Colonic mucosa (tissue), 4 donors: ENCODE measurements at regions of chr1 and their contacts with region 1.

Region 1: DNA sequence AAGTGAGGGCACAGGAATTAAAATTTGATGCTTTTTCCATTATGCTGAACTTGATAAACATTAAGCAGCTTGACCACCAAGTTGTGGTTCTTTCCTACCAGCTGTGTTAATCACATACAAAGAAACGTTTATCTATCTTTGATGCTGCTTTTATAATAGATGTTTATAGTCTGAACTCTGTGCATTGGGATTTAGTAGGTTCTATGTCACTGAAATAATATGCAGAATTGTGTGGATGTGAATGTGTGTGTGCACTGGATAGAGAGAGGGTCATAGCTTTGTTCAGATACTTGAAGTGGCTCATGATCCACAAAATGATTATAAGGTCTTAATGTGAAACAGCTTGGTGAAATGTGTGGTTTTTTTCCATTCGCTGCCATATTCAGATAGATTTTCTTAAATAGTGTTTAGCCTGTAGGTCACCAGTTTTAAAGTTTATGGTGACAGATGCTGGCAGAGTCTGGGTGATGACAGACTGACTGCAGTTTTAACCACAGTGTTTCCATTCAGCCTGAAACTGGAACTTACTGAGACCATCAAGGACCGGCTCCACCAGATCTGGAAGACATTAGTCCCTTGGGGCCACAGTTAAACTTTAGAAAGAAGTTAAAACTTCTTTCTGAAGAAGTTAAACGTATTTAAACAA is 10.2 kb downstream of the DDI2 start:
- DNase-seq: no peak
- H3K4me3 ChIP-seq: no peak overlapping the region
- H3K27ac ChIP-seq: no peak overlapping the region
- H3K4me1 ChIP-seq: peaks cover 10% of the 10 kb centered on the region
- H3K27me3 ChIP-seq: no peaks in the 10 kb centered on the region
- CTCF ChIP-seq: no peak

Region 2: DNA sequence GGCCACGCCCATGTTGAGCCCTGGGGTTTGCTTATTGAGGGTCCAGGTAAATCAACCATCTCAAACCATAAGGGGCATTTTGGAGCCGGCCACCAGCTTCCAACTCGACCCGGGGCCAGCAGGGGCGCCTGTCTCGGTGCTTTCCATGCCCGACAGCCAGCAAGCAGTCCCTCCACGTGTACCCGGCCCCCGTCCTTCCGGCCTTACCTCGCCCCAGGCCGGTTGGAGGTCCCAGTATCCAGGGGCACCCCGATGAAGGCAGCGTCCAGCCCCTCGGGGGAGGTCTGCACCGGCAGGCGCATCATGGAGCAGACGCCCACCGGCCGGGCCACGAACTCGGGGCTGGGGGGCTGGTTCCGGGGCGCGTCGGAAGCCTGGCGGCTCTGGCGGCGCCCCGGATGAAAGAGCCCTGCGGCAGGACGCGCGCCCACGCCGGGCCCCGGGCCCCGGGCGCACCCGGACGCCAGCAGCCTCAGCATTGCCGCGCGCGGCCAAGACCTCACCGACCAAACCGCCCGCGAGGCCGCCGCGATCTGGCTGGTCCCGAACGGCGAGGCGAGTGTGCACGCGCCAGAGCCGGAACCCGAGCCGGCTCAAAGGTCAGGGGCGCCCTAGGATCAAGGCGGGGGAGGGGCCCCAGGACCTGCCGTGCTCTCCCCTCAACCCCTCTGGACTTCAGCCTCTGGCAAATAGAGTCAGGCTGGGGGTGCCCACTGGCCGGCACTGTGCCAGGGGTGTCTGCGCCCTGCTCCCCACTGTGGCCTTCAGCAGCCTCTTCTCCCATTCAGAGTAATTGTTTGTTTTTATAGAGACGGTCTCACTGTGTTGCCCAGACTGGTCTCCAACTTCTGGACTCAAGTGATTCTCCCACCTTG is 42.7 kb before region 1 on chr1 and contains the start of gene AGMAT:
- intact Hi-C with region 1: loop called (anchors 5 kb)
- DNase-seq: peak; percentile 76
- H3K4me3 ChIP-seq: peak within 1 kb of the TSS; percentile 56
- H3K27ac ChIP-seq: peak within 1 kb of the TSS; percentile 12
- H3K4me1 ChIP-seq: peaks cover 4% of the 10 kb centered on the region
- H3K27me3 ChIP-seq: no peaks in the 10 kb centered on the region
- CTCF ChIP-seq: no peak
- total RNA-seq, gene AGMAT: 21.6 to 54.2 TPM

Region 3: GRCh38 chr1:15723631-15724251 is 96.3 kb after region 1 on chr1:
- intact Hi-C with region 1: loop called (anchors 10 kb)
- DNase-seq: no peak
- H3K4me3 ChIP-seq: no peak overlapping the region
- H3K27ac ChIP-seq: no peak overlapping the region
- H3K4me1 ChIP-seq: no peaks in the 10 kb centered on the region
- H3K27me3 ChIP-seq: no peaks in the 10 kb centered on the region
- CTCF ChIP-seq: no peak

Region 4: DNA sequence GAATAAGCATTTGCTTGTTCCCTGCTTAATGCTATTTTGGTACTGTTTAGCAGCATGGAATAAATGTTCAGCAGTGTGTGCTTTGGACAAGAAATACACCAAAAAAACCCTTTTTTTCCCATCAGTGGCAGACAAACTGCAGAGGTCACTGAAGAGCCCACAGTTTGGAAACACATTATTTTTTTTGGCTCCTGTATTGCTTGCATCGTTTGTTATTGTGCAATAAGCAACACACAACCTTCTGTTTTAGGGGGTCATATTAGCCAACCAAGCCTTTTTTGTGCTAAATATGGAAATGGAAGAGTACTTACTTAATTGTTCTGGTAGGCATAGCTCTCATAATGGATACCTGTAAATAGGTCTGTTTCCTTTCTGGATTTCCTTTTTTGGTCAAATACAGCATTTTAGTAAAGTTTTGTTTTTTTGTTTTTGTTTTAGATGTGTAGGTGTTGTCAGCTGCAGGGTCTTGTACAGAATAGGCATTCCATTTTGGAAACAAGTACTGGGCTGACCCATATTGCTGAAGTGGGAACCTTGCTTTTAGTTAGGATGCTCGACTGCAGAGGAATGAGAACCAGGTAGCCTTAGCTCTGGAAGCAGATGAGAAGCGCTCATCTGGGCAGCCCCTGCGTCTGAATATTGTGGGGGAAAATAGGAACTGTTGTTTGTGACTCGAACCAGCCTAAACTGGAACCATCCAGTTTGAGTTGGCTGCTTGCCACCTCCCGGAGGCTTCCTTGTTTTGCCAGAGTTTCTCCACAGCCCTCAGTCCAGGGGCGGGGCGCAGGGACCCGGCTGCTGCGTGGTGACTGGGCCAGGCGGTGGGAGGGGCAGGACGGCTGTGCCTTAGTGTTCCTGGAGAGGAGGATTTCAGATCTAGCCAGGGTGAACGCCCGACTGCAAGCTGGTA is 258.5 kb after region 1 on chr1:
- intact Hi-C with region 1: no loop called
- DNase-seq: peak; percentile 99
- H3K4me3 ChIP-seq: peak overlapping the region; percentile 28
- H3K27ac ChIP-seq: peak overlapping the region; percentile 79
- H3K4me1 ChIP-seq: peaks cover 9% of the 10 kb centered on the region
- H3K27me3 ChIP-seq: no peaks in the 10 kb centered on the region
- CTCF ChIP-seq: no peak